Endothelial cell of umbilical vein (primary cell): ENCODE measurements at regions of chr17 and their contacts with region 1.

Region 1: DNA sequence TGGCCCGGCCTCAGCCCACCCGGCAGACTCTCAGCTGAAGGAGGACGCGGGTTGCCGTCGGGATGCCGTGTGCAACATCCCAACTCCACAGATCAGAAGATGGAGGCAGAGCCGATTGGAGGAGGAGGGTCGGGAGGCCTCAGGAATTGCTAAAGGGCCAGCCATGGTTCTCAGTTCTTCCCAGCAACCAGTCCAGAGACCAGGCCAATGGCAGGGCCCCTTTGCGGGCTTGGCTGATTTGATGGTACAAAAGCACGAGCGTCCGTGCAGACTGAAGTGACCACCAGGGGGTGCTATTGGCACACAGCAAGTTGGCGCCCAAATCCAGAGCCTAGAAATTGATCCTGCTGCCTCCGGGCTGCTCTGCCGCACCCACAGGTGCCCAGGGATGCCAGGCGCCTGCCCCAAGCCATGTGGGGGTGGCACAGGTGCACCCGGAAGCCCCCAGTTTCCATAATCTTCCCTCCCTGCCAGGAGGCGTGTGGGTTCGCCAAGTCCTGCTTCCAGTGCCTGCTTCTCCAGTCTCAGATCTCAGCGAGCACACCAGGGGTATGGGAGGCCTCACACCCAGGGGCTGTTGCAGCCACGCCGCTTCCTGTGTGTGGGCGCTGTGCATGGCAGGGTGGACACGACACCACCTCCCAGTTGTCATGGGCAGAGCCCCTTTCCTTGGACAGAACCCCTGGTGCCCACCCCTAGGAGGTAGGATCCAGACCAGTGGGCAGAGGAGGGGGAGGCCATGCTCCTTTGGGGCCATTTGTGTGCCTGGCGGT is 7.1 kb upstream of the TEX19 start:
- DNase-seq: peak; percentile 85
- H3K4me3 ChIP-seq: no peak overlapping the region
- H3K27ac ChIP-seq: no peak overlapping the region
- H3K4me1 ChIP-seq: no peaks in the 10 kb centered on the region
- H3K27me3 ChIP-seq: no peaks in the 10 kb centered on the region
- CTCF ChIP-seq: peak; percentile 93 to 96
- POLR2A ChIP-seq: no peak

Region 2: GRCh38 chr17:82775001-82775823 is 423.3 kb after region 1 on chr17:
- CTCF ChIA-PET with region 1: interaction called, 3 read pairs
- POLR2A ChIA-PET with region 1: no interaction called
- dilution Hi-C with region 1: no loop called
- intact Hi-C with region 1: loop called (anchors 2 kb)
- DNase-seq: peak; percentile 44
- H3K4me3 ChIP-seq: no peak overlapping the region
- H3K27ac ChIP-seq: no peak overlapping the region
- H3K4me1 ChIP-seq: no peaks in the 10 kb centered on the region
- H3K27me3 ChIP-seq: no peaks in the 10 kb centered on the region
- CTCF ChIP-seq: peak; percentile 92 to 93
- POLR2A ChIP-seq: no peak